ENCODE measurements at regions of chr2 and their contacts with region 1.

Region 1: DNA sequence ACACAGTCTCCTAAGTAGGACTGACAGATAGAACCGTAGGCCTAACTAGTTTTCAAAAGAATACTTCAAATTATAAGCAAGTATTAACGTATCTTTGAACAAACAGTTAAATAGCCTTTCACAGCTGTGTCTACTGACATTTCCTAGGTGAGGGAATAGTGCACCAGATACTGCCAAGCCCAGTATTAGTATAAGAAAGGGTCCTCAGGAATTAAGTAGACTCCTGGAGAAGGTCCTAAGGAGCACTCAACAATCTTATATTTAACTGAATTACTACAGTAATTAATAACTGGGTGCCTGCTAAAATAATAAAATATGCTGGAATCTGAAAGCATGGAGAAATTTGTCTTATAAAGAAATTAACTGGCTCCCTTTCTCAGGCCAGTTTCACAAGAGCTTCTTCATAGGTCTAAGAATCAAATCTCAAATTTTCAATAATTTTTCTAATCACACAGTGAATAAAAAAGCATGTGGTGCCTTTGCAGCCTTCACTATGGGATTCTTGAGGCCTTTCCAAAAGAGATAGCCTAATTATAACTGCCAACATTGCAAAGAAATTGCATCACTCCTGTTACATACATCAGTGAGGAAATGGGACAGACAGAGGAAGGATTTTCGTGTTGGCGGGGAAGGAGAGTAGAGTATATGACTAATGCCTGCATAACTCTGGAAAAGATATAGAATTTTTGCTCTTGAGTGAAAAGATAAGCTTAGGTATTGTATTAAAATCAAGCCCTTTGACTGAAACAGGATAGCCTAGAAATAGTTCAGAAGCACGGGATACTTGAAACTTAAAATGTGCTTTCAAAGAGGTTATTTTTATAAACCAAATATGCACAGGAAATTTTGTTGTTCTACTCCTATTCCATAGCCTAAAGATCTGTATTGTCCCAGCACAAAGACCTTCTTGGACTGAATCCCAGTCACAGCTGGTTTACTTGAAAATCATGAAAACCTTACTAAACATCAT is 228.6 kb upstream of the STK17B start:
- DNase-seq: no peak

Region 2: GRCh38 chr2:196331143-196331542 is 68.9 kb before region 1 on chr2:
- intact Hi-C with region 1: loop called (anchors 5 kb)
- DNase-seq: no peak

Region 3: GRCh38 chr2:196372811-196373664 is 27.0 kb before region 1 on chr2:
- intact Hi-C with region 1: loop called (anchors 2 kb)
- DNase-seq: no peak

Measured in cardiac septum (tissue), 1 donor.